ENCODE measurements at regions of chr1 and their contacts with region 1.

Region 1: DNA sequence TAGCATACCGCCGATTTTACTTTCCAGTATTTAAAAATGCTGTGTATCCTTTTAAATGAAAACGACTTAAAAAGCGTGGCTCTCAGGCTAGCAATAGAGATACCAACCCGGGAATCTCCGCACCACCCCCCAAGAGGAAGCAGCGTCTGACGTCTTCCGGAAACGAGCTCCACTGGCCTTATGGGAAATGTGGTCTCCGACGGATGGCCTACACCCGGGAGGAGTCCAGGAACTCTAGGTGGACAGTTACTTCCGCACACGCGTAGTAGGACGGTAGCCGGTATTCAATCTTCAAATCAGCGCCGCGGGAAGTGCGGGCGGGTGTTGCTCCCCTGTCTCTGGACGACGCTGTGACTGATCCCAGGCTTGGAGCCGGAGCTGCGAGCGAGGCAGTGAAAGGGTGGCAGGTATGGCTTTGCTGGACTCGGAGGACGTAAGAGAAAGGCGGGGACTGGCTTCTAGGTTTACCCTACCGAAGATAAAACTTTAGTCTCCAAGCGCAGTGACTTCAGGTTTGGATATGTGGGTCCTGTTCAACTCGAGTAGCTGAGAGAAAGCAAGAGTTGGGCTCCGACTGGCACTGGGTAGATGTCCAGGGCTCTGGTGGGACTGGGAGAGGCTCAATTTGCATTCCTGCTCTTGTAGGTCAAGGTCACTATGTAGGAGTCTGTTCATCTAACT is at the start of gene ZNF684:
- DNase-seq: peak; percentile 83
- H3K4me3 Mint-ChIP-seq: peak within 1 kb of the TSS; percentile 97
- H3K27ac Mint-ChIP-seq: peak within 1 kb of the TSS; percentile 88
- H3K4me1 Mint-ChIP-seq: peaks cover 26% of the 10 kb centered on the region
- H3K27me3 Mint-ChIP-seq: peaks cover 2% of the 10 kb centered on the region
- total RNA-seq, gene ZNF684: 4.9 and 6.0 TPM in 2 replicates

Region 2: DNA sequence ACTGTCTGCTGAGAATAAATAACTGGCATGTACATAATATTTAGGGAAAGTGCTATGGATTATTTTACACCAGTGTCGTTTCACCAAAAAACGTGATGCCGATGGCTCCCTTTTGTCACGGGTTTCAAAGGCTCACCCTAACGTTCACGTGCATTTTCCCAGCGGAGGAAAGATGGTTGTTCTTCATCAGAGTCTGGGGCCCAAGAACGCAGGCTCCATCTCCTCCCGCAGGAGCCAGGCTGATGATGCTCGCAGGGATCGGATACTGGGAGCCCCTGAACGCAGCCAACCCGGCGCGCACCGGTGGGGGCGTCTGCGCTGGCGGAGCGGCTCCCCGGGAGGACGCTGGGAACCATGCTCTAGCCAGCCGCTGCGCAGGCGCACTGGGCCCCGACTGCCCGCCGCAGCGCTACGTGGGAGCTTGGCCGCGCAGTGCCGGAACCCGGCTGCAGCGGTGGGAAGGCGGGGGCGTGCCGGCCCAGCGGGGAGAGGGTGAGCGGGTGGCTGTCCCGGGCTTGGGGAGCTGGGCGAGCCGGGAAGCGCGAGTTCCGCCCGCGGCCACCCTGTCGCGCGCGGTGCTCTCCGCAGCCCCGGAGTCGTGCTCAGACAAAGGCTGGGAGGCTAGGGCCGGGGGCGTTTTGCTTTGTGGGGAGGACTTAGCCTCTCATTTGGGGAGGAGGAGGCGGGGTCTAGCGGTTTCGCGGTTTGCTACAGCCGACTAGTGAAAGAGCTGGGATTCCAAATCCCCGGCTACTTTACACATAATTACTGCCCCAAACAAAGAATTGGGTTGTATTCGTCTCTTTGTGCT is 81.6 kb before region 1 on chr1 and contains the start of gene ZFP69B:
- intact Hi-C with region 1: loop called (anchors 1 kb)
- DNase-seq: peak; percentile 86
- H3K4me3 Mint-ChIP-seq: peak within 1 kb of the TSS; percentile 84
- H3K27ac Mint-ChIP-seq: peak within 1 kb of the TSS; percentile 90
- H3K4me1 Mint-ChIP-seq: peaks cover 35% of the 10 kb centered on the region
- H3K27me3 Mint-ChIP-seq: no peaks in the 10 kb centered on the region
- total RNA-seq, gene ZFP69B: 5.1 and 5.8 TPM in 2 replicates

Region 3: DNA sequence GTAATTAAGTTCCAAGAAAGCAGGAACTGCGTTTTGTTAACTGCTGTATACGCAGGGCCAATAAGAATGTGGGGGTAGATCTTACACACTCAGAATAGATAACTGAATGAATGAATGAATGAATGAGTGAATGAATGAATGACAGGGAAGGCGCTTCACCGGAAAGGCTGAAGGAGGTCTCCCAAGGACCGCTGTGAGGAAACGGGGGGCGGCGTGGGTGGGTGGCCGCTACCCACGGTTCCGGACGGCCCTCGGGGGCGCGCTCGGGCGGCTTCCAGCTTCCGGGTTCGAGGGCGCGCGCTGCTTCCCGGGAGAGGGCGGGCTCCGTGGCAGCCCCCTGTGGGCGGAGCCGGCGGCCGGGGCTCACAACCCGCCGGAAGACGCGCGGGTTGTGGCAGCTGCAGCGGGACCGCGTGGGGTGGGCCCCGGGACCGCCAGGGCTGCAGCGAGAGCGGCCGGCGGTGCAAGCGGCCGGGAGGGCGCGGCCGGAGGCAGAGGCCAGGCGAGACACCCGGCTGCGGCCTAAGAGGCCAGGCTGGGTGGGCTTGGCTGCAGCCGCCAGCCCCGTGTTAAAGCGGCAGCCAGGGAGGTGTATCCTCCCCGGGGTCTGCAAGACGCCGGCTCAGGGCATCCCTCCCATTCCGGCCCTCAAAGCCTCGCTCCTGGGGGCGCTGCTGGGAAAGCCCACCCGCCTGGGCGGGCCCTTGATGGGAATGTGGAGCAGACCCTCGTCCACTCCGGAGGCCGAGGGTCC is 54.4 kb before region 1 on chr1 and contains the start of gene ZFP69:
- intact Hi-C with region 1: loop called (anchors 1 kb)
- DNase-seq: peak; percentile 64
- H3K4me3 Mint-ChIP-seq: peak within 1 kb of the TSS; percentile 85
- H3K27ac Mint-ChIP-seq: peak within 1 kb of the TSS; percentile 71
- H3K4me1 Mint-ChIP-seq: peaks cover 20% of the 10 kb centered on the region
- H3K27me3 Mint-ChIP-seq: peaks cover 2% of the 10 kb centered on the region
- total RNA-seq, gene ZFP69: 3.9 and 4.0 TPM in 2 replicates

Region 4: DNA sequence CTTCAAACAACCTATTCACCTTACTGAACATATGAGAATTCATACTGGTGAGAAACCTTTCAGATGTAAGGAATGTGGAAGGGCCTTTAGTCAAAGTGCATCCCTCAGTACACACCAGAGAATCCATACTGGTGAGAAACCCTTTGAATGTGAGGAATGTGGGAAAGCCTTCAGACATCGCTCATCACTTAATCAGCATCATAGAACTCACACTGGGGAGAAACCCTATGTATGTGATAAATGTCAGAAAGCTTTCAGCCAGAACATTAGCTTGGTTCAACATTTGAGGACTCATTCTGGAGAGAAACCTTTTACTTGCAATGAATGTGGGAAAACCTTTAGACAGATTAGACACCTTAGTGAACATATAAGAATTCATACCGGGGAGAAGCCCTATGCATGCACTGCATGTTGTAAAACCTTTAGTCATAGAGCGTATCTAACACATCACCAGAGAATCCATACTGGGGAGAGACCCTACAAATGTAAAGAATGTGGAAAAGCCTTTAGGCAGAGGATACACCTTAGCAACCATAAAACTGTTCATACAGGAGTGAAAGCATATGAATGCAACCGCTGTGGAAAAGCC is 36.1 kb before region 1 on chr1:
- intact Hi-C with region 1: loop called (anchors 1 kb)
- DNase-seq: no peak
- H3K4me3 Mint-ChIP-seq: no peak overlapping the region
- H3K27ac Mint-ChIP-seq: no peak overlapping the region
- H3K4me1 Mint-ChIP-seq: no peaks in the 10 kb centered on the region
- H3K27me3 Mint-ChIP-seq: no peaks in the 10 kb centered on the region

Region 5: DNA sequence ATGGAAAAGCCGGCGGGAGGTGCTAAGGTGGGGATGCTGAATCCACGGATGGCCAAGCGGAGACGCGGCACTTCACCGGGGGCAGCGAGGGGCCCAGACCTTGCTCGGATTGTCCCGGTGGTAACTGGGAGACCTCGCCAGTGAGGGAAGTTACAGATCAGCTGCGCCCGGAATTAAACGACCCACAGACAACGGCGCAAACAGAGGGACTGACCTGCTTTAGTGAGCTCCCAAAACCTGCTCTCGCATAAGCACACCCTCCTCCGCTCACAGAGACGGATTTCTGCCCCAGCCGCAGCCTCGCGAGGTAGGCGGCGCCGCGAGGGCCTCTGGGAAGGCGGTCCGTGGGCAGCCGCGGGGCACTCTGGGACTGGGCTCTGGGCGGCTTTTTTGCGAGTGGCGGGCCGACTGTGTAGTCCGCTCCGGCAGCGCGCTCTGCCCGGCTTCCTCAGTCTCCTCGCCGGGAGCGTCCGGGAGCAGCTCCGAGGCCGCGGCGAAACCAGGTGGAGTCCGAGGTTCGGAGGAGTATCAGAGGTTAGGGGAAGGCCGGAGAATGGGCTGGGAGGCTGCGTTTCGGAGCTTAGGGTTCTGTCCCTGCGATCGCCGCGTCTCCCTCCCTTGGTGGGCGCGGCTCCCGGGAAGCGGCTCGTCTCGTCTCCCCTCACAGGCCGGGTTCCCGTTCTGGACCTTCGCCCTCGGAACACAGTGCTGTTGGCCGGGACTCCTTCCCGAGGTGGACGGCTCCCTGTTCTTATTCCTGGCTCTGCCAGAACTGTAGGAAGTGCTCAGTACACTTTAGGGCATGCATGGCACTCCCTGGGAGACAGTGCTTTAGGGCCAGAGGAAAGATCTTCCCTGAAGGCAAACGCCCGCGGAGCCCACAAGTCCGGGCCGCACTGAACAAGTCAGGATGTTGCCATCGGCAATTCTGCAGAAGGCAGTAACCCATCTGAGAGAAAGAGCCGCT is 22.9 kb before region 1 on chr1 and contains the start of gene EXO5:
- intact Hi-C with region 1: loop called (anchors 1 kb)
- DNase-seq: peak; percentile 84
- H3K4me3 Mint-ChIP-seq: peak within 1 kb of the TSS; percentile 82
- H3K27ac Mint-ChIP-seq: peak within 1 kb of the TSS; percentile 76
- H3K4me1 Mint-ChIP-seq: peaks cover 13% of the 10 kb centered on the region
- H3K27me3 Mint-ChIP-seq: no peaks in the 10 kb centered on the region
- total RNA-seq, gene EXO5: 18.2 and 18.3 TPM in 2 replicates

Region 6: DNA sequence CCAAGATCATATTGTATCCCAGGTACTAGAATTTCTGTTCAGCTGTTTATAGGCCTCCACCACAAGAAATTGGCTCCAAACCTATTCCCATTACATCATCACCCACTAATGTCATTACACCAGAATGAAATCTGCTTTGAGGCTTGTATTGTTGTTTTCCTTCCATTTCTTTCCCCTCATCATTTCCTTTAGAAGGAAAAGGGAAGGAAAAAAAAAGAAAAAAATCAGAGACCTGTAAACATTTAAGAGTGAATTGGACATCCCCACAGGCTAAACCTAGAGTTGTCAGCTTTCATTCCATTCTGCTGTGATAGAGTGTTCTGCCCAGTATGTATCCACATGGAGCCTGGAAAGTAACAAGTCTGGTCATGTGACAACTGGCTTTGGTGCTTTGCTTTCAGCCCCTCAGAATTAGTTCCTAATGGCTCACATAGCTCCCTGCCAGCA is 204.6 kb after region 1 on chr1:
- intact Hi-C with region 1: no loop called
- DNase-seq: no peak
- H3K4me3 Mint-ChIP-seq: no peak overlapping the region
- H3K27ac Mint-ChIP-seq: no peak overlapping the region
- H3K4me1 Mint-ChIP-seq: peaks cover 31% of the 10 kb centered on the region
- H3K27me3 Mint-ChIP-seq: no peaks in the 10 kb centered on the region

Region 7: GRCh38 chr1:40862008-40862863 is 330.7 kb after region 1 on chr1 and contains the start of gene CITED4:
- intact Hi-C with region 1: loop called (anchors 10 kb)
- DNase-seq: peak; percentile 95
- H3K4me3 Mint-ChIP-seq: peak within 1 kb of the TSS; percentile 92
- H3K27ac Mint-ChIP-seq: peak within 1 kb of the TSS; percentile 97
- H3K4me1 Mint-ChIP-seq: peaks cover 24% of the 10 kb centered on the region
- H3K27me3 Mint-ChIP-seq: peaks cover 35% of the 10 kb centered on the region
- total RNA-seq, gene CITED4: 4.1 and 5.0 TPM in 2 replicates